Activated CD4-positive, alpha-beta memory T cell treated with anti-CD3 and anti-CD28 coated beads for 36 hours (primary cell): ENCODE measurements at regions of chr2 and their contacts with region 1.

Region 1: GRCh38 chr2:230847883-230848388 is 16.8 kb upstream of the ITM2C start:
- DNase-seq: peak; percentile 96
- H3K4me3 Mint-ChIP-seq: peak overlapping the region; percentile 21
- H3K27ac Mint-ChIP-seq: peak overlapping the region; percentile 33
- H3K4me1 Mint-ChIP-seq: peaks cover 20% of the 10 kb centered on the region
- H3K27me3 Mint-ChIP-seq: peaks cover 31% of the 10 kb centered on the region

Region 2: DNA sequence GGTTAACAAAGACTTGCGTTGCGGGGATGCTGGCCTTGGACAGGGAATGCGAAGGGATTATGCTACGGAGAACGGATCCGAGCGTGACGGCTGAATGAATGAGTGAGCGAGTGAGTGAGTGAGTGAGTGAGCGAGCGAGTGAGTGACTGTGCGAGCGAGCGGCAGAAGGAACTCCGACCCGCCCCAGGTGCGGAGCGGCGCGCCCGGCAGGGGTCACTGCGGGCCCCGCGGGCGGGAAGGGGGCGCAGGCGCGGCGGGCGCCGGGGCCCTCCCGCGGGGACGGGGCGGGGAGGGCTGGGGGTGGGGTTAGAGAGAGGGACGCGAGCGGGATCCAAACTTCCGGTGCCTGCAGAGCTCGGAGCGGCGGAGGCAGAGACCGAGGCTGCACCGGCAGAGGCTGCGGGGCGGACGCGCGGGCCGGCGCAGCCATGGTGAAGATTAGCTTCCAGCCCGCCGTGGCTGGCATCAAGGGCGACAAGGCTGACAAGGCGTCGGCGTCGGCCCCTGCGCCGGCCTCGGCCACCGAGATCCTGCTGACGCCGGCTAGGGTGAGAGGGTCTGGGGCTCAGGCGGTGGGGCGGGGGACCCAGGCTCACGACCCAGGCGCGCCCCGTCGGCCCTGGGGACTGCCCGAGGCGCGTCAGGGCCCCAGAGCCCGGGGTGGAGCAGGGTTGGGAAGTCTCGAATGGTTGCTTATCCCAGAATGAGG is 16.8 kb after region 1 on chr2 and contains the start of gene ITM2C:
- CTCF ChIA-PET with region 1: interaction called, 13 read pairs
- POLR2A ChIA-PET with region 1: interaction called, 5 read pairs
- intact Hi-C with region 1: loop called (anchors 2 kb)
- DNase-seq: peak; percentile 85
- H3K4me3 Mint-ChIP-seq: peak within 1 kb of the TSS; percentile 83
- H3K27ac Mint-ChIP-seq: no peak within 1 kb of the TSS
- H3K4me1 Mint-ChIP-seq: peaks cover 36% of the 10 kb centered on the region
- H3K27me3 Mint-ChIP-seq: peaks cover 8% of the 10 kb centered on the region
- total RNA-seq, gene ITM2C: 19.5 to 23.0 TPM

Region 3: DNA sequence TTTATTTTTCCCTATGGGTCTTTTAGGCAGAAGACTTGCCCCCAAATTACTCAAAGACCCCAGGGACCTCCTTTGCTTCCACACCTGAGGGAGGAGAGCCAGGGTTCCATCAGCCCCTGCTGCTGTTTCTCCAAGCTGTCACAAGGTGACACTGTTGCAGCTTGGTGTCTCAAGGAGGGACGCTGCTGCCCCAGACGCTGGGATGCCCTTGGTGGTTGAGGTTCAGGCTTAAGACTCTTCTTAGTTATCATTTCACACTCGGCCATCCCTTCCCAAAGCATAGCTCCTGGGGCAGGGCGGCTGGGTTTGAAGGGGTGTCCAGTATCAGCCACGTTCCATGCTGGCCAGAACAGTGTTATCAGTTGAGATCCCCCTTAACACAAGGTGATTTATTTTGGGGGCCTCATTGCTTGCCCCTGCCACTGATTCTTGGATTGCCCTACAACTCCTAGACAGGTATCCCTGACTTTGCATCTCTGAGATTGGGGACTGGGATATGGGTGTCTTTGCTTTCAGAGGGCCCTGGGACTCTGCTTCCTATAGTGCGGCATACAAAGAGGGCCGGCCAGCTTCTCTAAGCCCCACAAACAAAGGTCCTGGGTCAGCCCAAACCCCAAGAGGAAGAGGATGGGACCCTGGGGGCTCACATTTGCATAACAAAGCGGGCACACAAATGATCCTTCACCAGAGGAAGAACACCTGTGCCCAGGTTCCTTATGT is 54.4 kb after region 1 on chr2:
- CTCF ChIA-PET with region 1: interaction called, 10 read pairs
- POLR2A ChIA-PET with region 1: no interaction called
- intact Hi-C with region 1: loop called (anchors 1 kb)
- DNase-seq: peak; percentile 72
- H3K4me3 Mint-ChIP-seq: no peak overlapping the region
- H3K27ac Mint-ChIP-seq: no peak overlapping the region
- H3K4me1 Mint-ChIP-seq: peaks cover 49% of the 10 kb centered on the region
- H3K27me3 Mint-ChIP-seq: peaks cover 21% of the 10 kb centered on the region

Region 4: GRCh38 chr2:231034291-231034882 is 186.5 kb after region 1 on chr2:
- CTCF ChIA-PET with region 1: no interaction called
- POLR2A ChIA-PET with region 1: no interaction called
- intact Hi-C with region 1: no loop called
- DNase-seq: no peak
- H3K4me3 Mint-ChIP-seq: no peak overlapping the region
- H3K27ac Mint-ChIP-seq: no peak overlapping the region
- H3K4me1 Mint-ChIP-seq: no peaks in the 10 kb centered on the region
- H3K27me3 Mint-ChIP-seq: peaks cover 42% of the 10 kb centered on the region

Region 5: GRCh38 chr2:231124838-231125568 is 277.1 kb after region 1 on chr2 and contains the start of gene HTR2B:
- CTCF ChIA-PET with region 1: no interaction called
- POLR2A ChIA-PET with region 1: no interaction called
- intact Hi-C with region 1: no loop called
- DNase-seq: peak; percentile 38
- H3K4me3 Mint-ChIP-seq: no peak within 1 kb of the TSS
- H3K27ac Mint-ChIP-seq: no peak within 1 kb of the TSS
- H3K4me1 Mint-ChIP-seq: peaks cover 25% of the 10 kb centered on the region
- H3K27me3 Mint-ChIP-seq: no peaks in the 10 kb centered on the region
- total RNA-seq, gene HTR2B: not detected

Region 6: GRCh38 chr2:231181860-231182512 is 334.1 kb after region 1 on chr2:
- CTCF ChIA-PET with region 1: no interaction called
- POLR2A ChIA-PET with region 1: no interaction called
- intact Hi-C with region 1: no loop called
- DNase-seq: no peak
- H3K4me3 Mint-ChIP-seq: no peak overlapping the region
- H3K27ac Mint-ChIP-seq: no peak overlapping the region
- H3K4me1 Mint-ChIP-seq: peaks cover 14% of the 10 kb centered on the region
- H3K27me3 Mint-ChIP-seq: no peaks in the 10 kb centered on the region